Activated naive CD4-positive, alpha-beta T cell treated with anti-CD3 and anti-CD28 coated beads for 36 hours (primary cell): ENCODE measurements at regions of chr4 and their contacts with region 1.

Region 1: DNA sequence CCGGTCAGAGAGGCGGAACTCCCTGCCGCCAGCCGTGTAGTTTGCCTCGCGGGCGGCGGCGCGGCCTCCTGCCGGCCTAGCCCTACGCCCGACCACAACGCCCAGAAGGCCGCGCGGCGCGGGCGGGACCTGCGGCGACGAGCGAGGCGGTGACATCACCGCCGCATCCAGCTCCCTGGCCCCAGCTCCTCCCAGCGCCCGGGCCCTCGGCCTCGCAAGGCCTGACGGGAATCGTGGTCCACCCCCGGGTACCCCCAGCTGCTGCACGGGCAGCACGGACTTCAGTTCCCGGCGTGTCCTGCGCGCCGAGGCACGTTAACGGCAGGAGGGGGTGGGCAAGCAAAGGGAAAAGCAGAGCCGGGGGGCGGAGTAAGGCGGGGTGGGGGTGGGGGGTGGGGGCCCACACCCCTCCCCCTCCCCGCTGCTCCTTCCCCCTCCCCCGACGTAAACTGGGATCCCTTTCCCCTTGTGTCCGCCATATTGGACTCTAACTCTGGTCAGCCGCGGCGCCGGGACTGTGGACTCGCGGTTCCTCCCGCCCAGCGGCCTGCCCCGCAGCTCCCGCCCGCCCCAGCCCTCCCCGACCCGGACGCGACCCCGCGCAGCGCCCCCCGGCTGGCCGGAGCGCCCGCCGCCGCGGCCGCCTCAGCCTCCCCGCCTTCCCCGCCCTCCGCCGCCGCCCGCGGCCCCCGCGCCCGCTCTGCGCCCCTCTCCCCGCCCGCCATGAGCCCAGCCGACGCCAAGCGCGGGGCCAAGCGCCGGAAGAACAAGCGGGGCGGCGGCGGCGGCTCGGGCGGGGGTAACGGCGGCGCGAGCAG is at the start of gene FAM193A:
- DNase-seq: peak; percentile 99
- H3K4me3 Mint-ChIP-seq: peak within 1 kb of the TSS; percentile 86
- H3K27ac Mint-ChIP-seq: peak within 1 kb of the TSS; percentile 83
- H3K4me1 Mint-ChIP-seq: peaks cover 18% of the 10 kb centered on the region
- H3K27me3 Mint-ChIP-seq: no peaks in the 10 kb centered on the region
- total RNA-seq, gene FAM193A: 20.1 to 20.4 TPM

Region 2: DNA sequence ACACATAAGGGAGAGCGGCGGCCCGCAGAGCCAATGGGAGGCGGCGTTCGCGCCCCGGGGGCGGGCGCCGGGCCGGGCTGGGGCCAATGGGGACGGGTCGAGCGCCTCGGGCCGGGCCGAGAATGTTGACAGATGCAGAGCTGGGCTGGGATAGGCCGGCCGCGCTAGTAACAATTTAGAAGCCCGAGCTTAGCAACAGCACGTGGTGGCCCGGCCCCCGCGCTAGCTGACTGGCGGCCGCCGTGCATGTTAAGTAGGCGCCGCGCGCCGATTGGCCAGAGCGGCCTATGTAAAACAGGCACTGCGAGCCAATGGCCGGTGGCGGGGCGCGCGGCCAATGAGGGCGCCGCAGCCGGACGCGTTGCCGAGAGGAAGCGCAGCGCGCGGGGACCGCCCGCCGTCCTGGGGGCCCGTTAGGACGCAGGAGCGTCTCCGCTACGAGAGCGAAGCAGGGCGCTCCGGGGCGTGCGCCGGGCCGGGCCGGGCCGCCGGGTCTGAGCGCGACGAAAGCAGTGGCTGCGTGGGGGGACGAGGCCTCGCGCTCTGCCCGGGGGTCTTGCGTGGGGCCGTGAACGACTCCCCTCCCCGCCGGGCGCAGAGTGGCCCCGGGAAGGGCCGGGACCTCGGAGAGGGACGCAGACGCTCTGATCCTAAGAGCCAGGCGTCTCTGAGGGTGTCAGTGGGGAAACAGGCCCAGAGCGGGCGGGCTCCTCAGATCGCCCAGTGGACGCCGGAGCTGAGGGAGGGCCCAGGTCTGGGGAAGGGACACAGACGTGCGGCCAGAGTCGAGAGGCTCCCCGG is 274.1 kb before region 1 on chr4:
- CTCF ChIA-PET with region 1: no interaction called
- intact Hi-C with region 1: loop called (anchors 1 kb)
- DNase-seq: peak; percentile 98
- H3K4me3 Mint-ChIP-seq: peak overlapping the region; percentile 69
- H3K27ac Mint-ChIP-seq: no peak overlapping the region
- H3K4me1 Mint-ChIP-seq: peaks cover 2% of the 10 kb centered on the region
- H3K27me3 Mint-ChIP-seq: no peaks in the 10 kb centered on the region

Region 3: GRCh38 chr4:2418650-2419571 is 117.5 kb before region 1 on chr4 and contains the start of gene CFAP99:
- CTCF ChIA-PET with region 1: no interaction called
- intact Hi-C with region 1: loop called (anchors 1 kb)
- DNase-seq: peak; percentile 97
- H3K4me3 Mint-ChIP-seq: peak within 1 kb of the TSS; percentile 81
- H3K27ac Mint-ChIP-seq: no peak within 1 kb of the TSS
- H3K4me1 Mint-ChIP-seq: peaks cover 38% of the 10 kb centered on the region
- H3K27me3 Mint-ChIP-seq: peaks cover 37% of the 10 kb centered on the region
- total RNA-seq, gene CFAP99: not detected

Region 4: GRCh38 chr4:2689825-2690700 is 153.7 kb after region 1 on chr4:
- CTCF ChIA-PET with region 1: no interaction called
- intact Hi-C with region 1: loop called (anchors 5 kb)
- DNase-seq: peak; percentile 59
- H3K4me3 Mint-ChIP-seq: no peak overlapping the region
- H3K27ac Mint-ChIP-seq: peak overlapping the region; percentile 47
- H3K4me1 Mint-ChIP-seq: peaks cover 34% of the 10 kb centered on the region
- H3K27me3 Mint-ChIP-seq: no peaks in the 10 kb centered on the region

Region 5: DNA sequence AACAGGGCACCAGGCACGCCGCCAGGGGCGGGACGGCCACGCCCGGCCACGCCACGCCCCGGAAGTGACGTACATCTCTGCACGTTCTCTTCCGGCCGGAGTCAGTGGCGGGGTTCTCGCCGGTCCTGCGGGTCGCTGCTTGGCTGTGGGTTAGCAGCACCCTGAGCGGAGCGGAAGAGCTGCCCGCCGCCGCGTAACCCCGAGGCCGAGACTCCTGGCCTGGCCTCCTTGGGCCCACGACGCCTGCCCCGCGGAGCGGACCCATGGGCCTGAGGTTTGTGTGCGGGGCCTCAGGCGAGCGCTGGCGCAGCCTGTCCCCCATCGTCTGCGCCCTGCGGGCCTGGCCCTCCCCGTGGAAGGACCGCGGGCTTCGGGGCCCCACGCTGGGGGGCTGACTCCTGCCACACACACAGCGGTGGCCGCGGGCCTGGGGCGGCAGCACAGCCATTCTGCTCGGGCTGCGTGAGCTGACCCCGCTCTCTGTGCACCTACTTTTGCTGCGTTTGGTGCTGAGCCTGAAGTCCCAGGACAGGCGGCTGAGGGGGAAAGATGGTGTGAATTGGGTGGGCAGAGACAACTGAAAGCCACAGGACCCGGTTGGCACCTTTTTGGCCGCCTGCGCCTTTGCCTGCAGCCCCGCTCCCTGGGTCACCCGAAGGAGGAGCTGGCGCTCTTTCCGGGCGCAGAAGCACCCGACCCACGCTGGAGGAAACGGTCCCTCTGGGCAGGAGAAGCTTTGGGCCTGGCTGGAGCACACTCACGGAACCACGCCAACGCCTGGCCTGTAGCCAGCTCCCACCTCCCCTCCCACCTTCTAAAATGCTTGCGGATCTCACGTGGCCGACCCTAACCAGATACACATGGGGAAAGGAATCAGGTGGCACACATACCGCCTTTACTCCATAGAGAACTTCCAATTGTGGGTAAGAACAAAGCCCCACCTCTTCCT is 398.7 kb after region 1 on chr4:
- CTCF ChIA-PET with region 1: interaction called, 4 read pairs
- intact Hi-C with region 1: loop called (anchors 5 kb)
- DNase-seq: peak; percentile 97
- H3K4me3 Mint-ChIP-seq: peak overlapping the region; percentile 89
- H3K27ac Mint-ChIP-seq: peak overlapping the region; percentile 96
- H3K4me1 Mint-ChIP-seq: peaks cover 57% of the 10 kb centered on the region
- H3K27me3 Mint-ChIP-seq: no peaks in the 10 kb centered on the region